ENCODE measurements at regions of chr20 and their contacts with region 1.

Region 1: GRCh38 chr20:61886721-61887594 is 178.7 kb downstream of the TAF4 start:
- DNase-seq: no peak
- H3K4me3 ChIP-seq: no peak overlapping the region
- CTCF ChIP-seq: peak; percentile 83

Region 2: GRCh38 chr20:61874501-61875026 is 12.4 kb before region 1 on chr20:
- CTCF ChIA-PET with region 1: interaction called, 28 read pairs
- POLR2A ChIA-PET with region 1: no interaction called
- DNase-seq: no peak
- H3K4me3 ChIP-seq: no peak overlapping the region
- CTCF ChIP-seq: peak; percentile 30

Measured in AG04449 (cell line).